Caco-2 (cell line): ENCODE measurements at regions of chr11 and their contacts with region 1.

Region 1: GRCh38 chr11:86608251-86608799 is 64.1 kb downstream of the ME3 start:
- DNase-seq: peak; percentile 76
- H3K4me3 ChIP-seq: no peak overlapping the region
- H3K4me3 Mint-ChIP-seq: peak overlapping the region; percentile 45
- H3K27ac Mint-ChIP-seq: no peak overlapping the region
- H3K4me1 ChIP-seq: peaks cover 7% of the 10 kb centered on the region; the same call in 1 of the 2 replicates
- H3K4me1 Mint-ChIP-seq: peaks cover 23% of the 10 kb centered on the region
- H3K27me3 ChIP-seq: no peaks in the 10 kb centered on the region
- H3K27me3 Mint-ChIP-seq: no peaks in the 10 kb centered on the region
- CTCF ChIP-seq: peak; percentile 95 to 99

Region 2: DNA sequence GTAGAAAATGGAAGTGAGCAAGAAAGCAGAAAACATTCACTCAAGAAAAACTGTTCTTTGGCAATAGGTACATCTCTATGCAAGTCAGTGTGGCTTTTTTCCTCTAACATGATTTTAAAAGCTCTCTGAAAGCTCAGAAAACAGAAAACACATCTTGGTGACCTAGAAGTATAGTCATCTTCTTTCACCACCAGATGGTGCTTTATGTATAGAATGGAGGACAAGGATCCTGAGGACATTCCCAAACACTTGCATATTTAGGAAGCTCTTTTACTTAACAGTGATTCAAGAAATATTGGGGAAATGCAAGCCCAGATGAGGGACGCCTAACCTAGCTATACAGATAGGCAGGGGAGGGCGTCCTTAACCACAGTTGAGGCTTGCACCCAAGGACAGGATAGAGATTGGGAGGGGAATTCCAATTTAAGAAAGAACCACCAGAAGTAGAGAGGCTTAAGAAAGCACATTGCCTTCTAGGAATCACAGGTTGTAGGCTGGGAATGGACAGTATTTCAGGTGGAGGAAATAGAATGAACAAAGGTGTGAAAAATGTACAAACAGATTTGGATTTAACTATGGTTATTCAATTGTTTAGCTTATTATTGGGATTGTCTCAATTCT is 247.4 kb before region 1 on chr11:
- CTCF ChIA-PET with region 1: interaction called, 9 read pairs
- POLR2A ChIA-PET with region 1: no interaction called
- intact Hi-C with region 1: loop called (anchors 2 kb)
- DNase-seq: peak in 1 of 2 experiments; percentile 47
- H3K4me3 ChIP-seq: no peak overlapping the region
- H3K4me3 Mint-ChIP-seq: no peak overlapping the region
- H3K27ac Mint-ChIP-seq: no peak overlapping the region
- H3K4me1 ChIP-seq: no peaks in the 10 kb centered on the region
- H3K4me1 Mint-ChIP-seq: no peaks in the 10 kb centered on the region
- H3K27me3 ChIP-seq: no peaks in the 10 kb centered on the region
- H3K27me3 Mint-ChIP-seq: no peaks in the 10 kb centered on the region
- CTCF ChIP-seq: peak; percentile 71 to 78

Region 3: DNA sequence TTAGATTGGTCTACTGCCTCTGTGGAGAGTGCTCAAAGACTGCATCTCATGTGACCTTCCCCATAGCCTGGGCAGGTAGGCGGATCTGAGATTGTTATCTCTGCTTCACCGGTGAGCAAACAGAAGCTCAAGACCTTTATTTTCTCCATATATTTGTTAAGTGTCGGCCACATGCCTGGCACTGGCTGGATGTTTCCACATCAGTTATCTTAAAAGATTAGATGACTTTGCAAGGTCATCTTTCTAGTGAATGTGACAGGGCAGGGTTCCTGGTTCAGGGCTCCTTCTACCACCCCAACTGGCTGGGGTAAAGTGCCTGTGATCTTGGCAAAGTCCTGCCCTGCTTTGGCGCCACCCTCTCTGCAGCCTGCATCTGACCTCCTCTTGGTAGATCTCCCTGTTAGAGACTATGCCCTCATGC is 108.6 kb before region 1 on chr11:
- CTCF ChIA-PET with region 1: interaction called, 10 read pairs
- POLR2A ChIA-PET with region 1: no interaction called
- intact Hi-C with region 1: no loop called
- DNase-seq: peak; percentile 89 to 94
- H3K4me3 ChIP-seq: no peak overlapping the region
- H3K4me3 Mint-ChIP-seq: no peak overlapping the region
- H3K27ac Mint-ChIP-seq: no peak overlapping the region
- H3K4me1 ChIP-seq: peaks cover 59% of the 10 kb centered on the region
- H3K4me1 Mint-ChIP-seq: peaks cover 13% of the 10 kb centered on the region
- H3K27me3 ChIP-seq: no peaks in the 10 kb centered on the region
- H3K27me3 Mint-ChIP-seq: no peaks in the 10 kb centered on the region
- CTCF ChIP-seq: no peak

Region 4: DNA sequence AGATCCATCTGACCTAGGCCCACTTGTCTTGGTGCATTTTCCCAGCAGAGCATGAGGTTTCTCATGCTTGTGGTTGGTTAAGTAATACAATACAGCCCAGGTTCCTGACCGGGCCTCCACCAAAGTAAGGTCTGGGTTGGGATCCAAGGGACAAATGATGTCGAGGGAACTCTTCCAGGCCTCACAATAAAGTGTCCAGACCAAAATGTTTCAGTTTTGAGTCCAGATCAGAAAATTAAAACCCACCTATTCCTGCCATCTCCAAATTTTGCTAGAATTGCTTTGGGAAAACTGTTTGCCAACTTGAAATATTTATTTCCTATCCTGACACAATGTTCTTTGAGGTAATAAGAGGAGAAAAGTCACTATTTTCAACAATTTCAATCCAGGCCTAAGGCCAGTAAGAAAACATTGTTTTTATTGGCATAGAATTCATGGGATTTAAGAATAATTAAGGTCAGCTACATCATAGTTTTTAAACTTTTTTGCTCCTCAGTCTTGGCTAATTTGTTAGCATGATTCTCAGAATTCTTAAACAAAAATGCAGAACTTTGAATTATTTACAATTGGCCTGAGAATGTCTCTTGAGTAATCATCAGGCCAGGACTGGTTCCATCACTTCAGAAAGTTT is 12.7 kb after region 1 on chr11:
- CTCF ChIA-PET with region 1: interaction called, 17 read pairs
- POLR2A ChIA-PET with region 1: no interaction called
- intact Hi-C with region 1: no loop called
- DNase-seq: no peak
- H3K4me3 ChIP-seq: no peak overlapping the region
- H3K4me3 Mint-ChIP-seq: no peak overlapping the region
- H3K27ac Mint-ChIP-seq: peak overlapping the region; percentile 39
- H3K4me1 ChIP-seq: peaks cover 40% of the 10 kb centered on the region
- H3K4me1 Mint-ChIP-seq: peaks cover 32% of the 10 kb centered on the region
- H3K27me3 ChIP-seq: no peaks in the 10 kb centered on the region
- H3K27me3 Mint-ChIP-seq: no peaks in the 10 kb centered on the region
- CTCF ChIP-seq: no peak

Region 5: GRCh38 chr11:86784241-86784681 is 175.9 kb after region 1 on chr11:
- CTCF ChIA-PET with region 1: interaction called, 12 read pairs
- POLR2A ChIA-PET with region 1: no interaction called
- intact Hi-C with region 1: no loop called
- DNase-seq: no peak
- H3K4me3 ChIP-seq: no peak overlapping the region
- H3K4me3 Mint-ChIP-seq: no peak overlapping the region
- H3K27ac Mint-ChIP-seq: peak overlapping the region; percentile 40
- H3K4me1 ChIP-seq: peaks cover 77% of the 10 kb centered on the region
- H3K4me1 Mint-ChIP-seq: peaks cover 62% of the 10 kb centered on the region
- H3K27me3 ChIP-seq: no peaks in the 10 kb centered on the region
- H3K27me3 Mint-ChIP-seq: no peaks in the 10 kb centered on the region
- CTCF ChIP-seq: no peak

Region 6: GRCh38 chr11:86818466-86819192 is 210.3 kb after region 1 on chr11:
- CTCF ChIA-PET with region 1: interaction called, 10 read pairs
- POLR2A ChIA-PET with region 1: no interaction called
- intact Hi-C with region 1: loop called (anchors 1 kb)
- DNase-seq: peak in 1 of 2 experiments; percentile 74
- H3K4me3 ChIP-seq: no peak overlapping the region
- H3K4me3 Mint-ChIP-seq: no peak overlapping the region
- H3K27ac Mint-ChIP-seq: peak overlapping the region; percentile 23
- H3K4me1 ChIP-seq: peaks cover 52% of the 10 kb centered on the region
- H3K4me1 Mint-ChIP-seq: peaks cover 41% of the 10 kb centered on the region
- H3K27me3 ChIP-seq: no peaks in the 10 kb centered on the region
- H3K27me3 Mint-ChIP-seq: no peaks in the 10 kb centered on the region
- CTCF ChIP-seq: peak; percentile 83 to 95